Dendritic cell treated with granulocyte-macrophage colony-stimulating factor and Interleukin-4, amounts not matched to agents 40 ng/mL and 50 ng/mL, for 4 days (primary cell): ENCODE measurements at regions of chrX and their contacts with region 1.

Region 1: GRCh38 chrX:14029425-14030173 is at the start of gene GEMIN8:
- H3K4me3 Mint-ChIP-seq: peak within 1 kb of the TSS; percentile 92
- H3K27ac Mint-ChIP-seq: peak within 1 kb of the TSS; percentile 98
- H3K4me1 Mint-ChIP-seq: peaks cover 18% of the 10 kb centered on the region
- H3K27me3 Mint-ChIP-seq: no peaks in the 10 kb centered on the region

Region 2: DNA sequence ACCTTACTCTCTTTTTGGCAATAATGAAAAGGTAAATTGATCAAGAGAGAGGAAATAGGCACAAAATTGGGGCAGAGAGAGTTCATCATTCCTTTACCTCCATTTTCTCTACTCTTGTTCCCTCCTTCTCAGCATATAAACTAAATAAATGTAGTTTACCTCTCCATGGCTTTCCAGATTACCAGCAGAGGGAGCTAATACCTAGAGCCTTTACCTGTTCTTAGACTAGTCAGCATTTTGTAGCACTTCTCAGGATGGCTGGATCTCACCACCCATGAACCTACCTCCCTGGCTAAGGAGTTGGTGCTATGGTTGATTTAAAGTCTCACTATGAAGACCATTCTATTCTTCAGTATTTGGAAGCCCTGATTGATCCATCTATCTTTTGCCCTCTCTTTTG is 279.4 kb before region 1 on chrX:
- intact Hi-C with region 1: loop called (anchors 10 kb)
- H3K4me3 Mint-ChIP-seq: no peak overlapping the region
- H3K27ac Mint-ChIP-seq: no peak overlapping the region
- H3K4me1 Mint-ChIP-seq: peaks cover 25% of the 10 kb centered on the region
- H3K27me3 Mint-ChIP-seq: no peaks in the 10 kb centered on the region

Region 3: GRCh38 chrX:14003876-14004425 is 25.6 kb before region 1 on chrX:
- intact Hi-C with region 1: no loop called
- H3K4me3 Mint-ChIP-seq: no peak overlapping the region
- H3K27ac Mint-ChIP-seq: no peak overlapping the region
- H3K4me1 Mint-ChIP-seq: no peaks in the 10 kb centered on the region
- H3K27me3 Mint-ChIP-seq: no peaks in the 10 kb centered on the region